ENCODE measurements at regions of chr5 and their contacts with region 1.

Region 1: DNA sequence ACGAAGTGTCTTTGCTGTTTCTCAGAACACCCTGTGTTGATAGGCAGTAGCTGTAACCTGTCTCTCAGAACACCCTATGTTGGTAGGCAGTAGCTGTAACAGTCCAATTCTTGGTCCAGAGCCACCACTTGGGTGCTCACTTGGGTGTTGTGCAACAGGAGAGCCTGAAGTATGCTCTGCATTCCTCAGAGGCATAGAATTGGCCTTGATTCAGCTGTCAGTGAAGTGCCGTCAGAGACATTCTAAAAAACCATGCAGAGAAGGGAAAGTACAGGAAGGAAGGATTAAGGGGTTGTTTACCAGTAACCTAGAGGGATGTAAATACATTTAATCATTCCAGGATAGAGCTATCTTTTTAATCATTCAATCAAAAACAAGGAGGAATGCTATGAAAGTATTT is 231.2 kb downstream of the ARRDC3 start:
- DNase-seq: peak; percentile 72
- H3K4me3 Mint-ChIP-seq: no peak overlapping the region
- H3K27ac Mint-ChIP-seq: no peak overlapping the region
- H3K4me1 Mint-ChIP-seq: peaks cover 41% of the 10 kb centered on the region
- H3K27me3 Mint-ChIP-seq: no peaks in the 10 kb centered on the region
- CTCF ChIP-seq: no peak

Region 2: GRCh38 chr5:91176288-91177016 is 24.5 kb after region 1 on chr5:
- CTCF ChIA-PET with region 1: interaction called, 12 read pairs
- intact Hi-C with region 1: no loop called
- DNase-seq: peak; percentile 30
- H3K4me3 Mint-ChIP-seq: no peak overlapping the region
- H3K27ac Mint-ChIP-seq: no peak overlapping the region
- H3K4me1 Mint-ChIP-seq: peaks cover 32% of the 10 kb centered on the region
- H3K27me3 Mint-ChIP-seq: no peaks in the 10 kb centered on the region
- CTCF ChIP-seq: no peak

Region 3: DNA sequence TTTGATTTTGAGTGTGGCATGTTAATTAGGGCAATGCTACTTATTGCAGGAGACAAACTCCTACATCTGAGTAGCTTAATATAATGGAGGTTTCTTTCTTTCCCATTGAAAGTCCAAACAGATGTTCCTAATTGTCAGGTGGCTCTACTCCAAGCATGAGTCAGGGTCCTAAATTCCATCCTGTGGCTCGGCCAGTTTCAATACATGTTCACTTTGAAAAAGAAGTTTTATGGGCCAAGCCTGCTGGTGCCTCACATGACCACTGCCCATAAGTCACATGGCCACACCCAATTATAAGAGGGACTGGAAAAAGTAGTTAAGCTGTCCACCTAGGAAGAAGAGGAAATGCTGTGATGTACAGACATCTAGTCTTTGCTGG is 60.8 kb after region 1 on chr5:
- CTCF ChIA-PET with region 1: no interaction called
- intact Hi-C with region 1: no loop called
- DNase-seq: no peak
- H3K4me3 Mint-ChIP-seq: no peak overlapping the region
- H3K27ac Mint-ChIP-seq: no peak overlapping the region
- H3K4me1 Mint-ChIP-seq: peaks cover 8% of the 10 kb centered on the region
- H3K27me3 Mint-ChIP-seq: no peaks in the 10 kb centered on the region
- CTCF ChIP-seq: no peak